IMR-90 (cell line): ENCODE measurements at regions of chr11 and their contacts with region 1.

Region 1: DNA sequence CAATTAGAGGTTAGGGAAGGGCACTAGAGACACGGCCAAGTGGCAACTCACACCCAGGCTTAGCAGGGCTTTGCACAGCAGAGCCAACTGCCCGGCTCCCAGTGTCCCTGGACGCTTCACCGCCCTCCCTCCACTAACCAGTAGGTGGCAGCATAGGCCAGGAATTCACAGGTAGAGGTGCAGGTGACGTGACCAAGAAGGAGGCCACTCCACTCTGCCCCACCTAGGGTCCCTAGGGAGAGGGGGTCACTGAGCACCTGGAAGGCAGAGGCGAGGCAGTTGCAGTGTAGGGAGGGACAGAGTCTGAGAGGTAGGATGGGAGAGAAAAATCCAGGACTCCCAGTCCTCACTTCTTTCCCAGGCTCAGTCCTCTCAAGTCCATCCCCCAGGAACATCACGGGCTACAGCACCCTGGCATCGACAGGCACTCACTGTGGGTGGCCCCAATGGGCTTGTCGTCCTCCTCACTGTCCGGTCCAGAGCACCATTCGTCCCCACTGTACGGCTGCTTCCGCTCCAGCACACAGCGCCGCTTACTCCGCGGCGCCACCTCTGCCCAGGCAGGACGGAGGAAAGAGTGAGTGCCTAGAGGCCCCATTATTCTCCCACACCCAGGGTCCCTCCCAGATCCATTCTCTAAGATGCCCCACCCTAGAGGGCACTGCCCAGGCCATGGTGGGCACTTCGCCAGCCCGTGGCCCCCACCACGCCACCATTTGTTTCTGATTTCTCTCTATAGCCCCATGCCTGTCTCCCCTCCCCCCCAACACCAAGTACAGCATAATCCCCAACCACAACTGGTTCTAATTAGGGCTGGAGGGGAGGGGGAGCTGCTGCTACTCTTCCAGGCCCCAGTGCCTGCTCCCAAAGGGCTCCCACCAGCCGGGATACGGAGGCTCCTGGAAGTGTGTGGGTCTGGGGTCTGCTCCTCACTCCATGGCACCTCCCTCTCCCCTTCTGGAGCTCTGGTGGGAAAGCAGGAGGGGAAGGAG is 18.4 kb downstream of the BCL9L start:
- DNase-seq: peak; percentile 62
- ATAC-seq: peak; percentile 5; the same call in 1 of the 2 replicates
- H3K4me3 ChIP-seq: no peak overlapping the region
- H3K27ac ChIP-seq: peak overlapping the region; percentile 10; the same call in 1 of the 2 replicates
- H3K4me1 ChIP-seq: peaks cover 31% of the 10 kb centered on the region
- H3K27me3 ChIP-seq: no peaks in the 10 kb centered on the region
- CTCF ChIP-seq: peak; percentile 86
- POLR2A ChIP-seq: no peak
- RAD21 ChIP-seq: peak; percentile 97

Region 2: GRCh38 chr11:118705111-118705741 is 202.1 kb before region 1 on chr11:
- CTCF ChIA-PET with region 1: no interaction called
- POLR2A ChIA-PET with region 1: no interaction called
- dilution Hi-C with region 1: no loop called
- in situ Hi-C with region 1: no loop called
- intact Hi-C with region 1: no loop called
- DNase-seq: no peak
- ATAC-seq: no peak
- H3K4me3 ChIP-seq: no peak overlapping the region
- H3K27ac ChIP-seq: no peak overlapping the region
- H3K4me1 ChIP-seq: no peaks in the 10 kb centered on the region
- H3K27me3 ChIP-seq: peaks cover 29% of the 10 kb centered on the region
- CTCF ChIP-seq: no peak
- POLR2A ChIP-seq: no peak
- RAD21 ChIP-seq: no peak

Region 3: DNA sequence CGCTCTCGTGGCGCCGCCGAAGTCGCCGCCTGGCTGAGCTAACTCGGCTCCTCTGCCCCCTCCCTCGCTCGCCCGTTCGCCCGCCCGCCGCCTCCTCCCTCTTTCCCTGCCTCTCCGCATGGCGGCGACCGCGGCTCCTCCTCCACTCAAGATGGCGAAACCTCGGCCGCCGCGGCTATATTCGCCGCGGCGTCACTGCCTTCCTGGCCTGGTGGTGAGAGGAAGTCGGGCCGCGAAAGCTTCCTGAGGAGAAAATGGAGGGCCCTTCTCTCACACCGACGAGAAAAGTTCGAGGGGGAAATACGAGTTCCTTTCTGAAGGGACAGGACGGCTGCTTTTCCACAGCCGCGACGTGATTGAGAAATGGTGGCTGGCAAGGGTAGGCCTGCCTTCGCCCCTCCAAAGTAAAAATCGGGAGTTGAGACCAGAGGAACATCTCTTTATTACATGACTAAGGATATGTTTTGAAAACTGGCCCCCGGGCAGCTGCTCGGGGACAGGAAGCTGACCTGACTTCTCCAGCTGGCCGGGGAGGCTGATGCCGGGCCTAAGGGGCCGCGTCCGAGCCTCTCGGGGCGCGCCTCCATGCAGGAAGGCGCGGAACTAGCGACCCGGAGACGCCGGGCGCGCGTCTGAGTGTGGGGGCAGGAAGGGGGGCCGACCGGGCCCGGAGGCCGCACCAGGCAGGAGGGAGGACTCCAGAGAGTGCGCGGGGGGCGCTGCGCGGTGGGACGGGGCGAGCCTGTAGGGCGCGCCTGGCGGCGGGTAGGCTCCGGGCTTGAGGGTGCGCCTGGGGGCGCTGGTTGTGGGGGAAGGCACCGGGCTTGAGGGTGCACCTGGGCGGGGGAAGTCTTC is 116.0 kb before region 1 on chr11 and contains the start of gene DDX6:
- CTCF ChIA-PET with region 1: interaction called, 4 read pairs
- POLR2A ChIA-PET with region 1: interaction called, 3 read pairs
- dilution Hi-C with region 1: no loop called
- in situ Hi-C with region 1: no loop called
- intact Hi-C with region 1: loop called (anchors 5 kb)
- DNase-seq: peak; percentile 86
- ATAC-seq: peak; percentile 75
- H3K4me3 ChIP-seq: peak within 1 kb of the TSS; percentile 97
- H3K27ac ChIP-seq: peak within 1 kb of the TSS; percentile 98
- H3K4me1 ChIP-seq: no peaks in the 10 kb centered on the region
- H3K27me3 ChIP-seq: no peaks in the 10 kb centered on the region
- CTCF ChIP-seq: peak; percentile 50
- POLR2A ChIP-seq: peak; percentile 94
- RAD21 ChIP-seq: peak; percentile 9; the same call in 1 of the 2 replicates
- total RNA-seq, gene DDX6: 197 and 225 TPM in 2 replicates

Region 4: DNA sequence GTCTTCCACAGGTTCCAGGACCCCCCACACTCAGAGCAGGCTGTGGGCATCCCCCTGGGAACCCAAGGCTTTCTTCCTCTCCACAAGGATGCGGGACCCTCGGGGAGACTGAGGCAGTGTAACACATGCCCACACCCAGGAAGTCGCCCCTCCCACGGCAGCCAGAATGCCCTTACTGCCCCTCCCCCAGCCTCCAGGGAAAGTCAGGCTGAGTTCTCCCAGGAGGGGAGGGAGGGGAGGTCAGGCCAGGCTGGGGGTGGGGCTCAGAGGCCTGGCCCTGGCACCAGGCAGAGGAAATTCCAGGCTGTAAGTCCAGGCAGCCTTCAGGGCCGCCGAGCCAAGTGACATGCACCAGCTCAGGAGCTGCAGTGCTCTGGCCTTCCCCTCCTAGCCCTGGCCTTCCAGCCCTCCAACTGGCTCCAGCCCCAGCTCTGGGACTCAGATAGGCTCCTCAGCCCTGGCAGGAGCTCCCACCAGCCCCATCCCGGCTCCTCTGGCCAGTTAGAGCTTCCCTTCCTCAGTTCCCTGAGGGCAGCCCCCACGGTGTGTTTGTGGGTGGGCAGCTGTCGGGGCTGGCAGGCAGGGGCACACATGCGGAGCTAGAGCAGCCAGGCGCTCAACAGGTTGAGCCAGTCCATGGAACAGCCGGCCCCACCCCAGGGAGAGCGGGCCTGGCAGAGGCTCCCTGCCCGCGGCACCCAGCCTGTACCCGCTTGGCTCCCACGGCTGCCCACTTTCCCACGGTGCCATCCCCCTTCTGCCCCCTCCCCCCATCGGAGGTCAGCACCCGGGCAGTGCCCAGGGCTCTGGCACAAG is 14.8 kb after region 1 on chr11:
- CTCF ChIA-PET with region 1: interaction called, 5 read pairs
- POLR2A ChIA-PET with region 1: interaction called, 18 read pairs
- dilution Hi-C with region 1: no loop called
- in situ Hi-C with region 1: no loop called
- intact Hi-C with region 1: loop called (anchors 1 kb)
- DNase-seq: peak; percentile 56
- ATAC-seq: peak; percentile 3
- H3K4me3 ChIP-seq: peak overlapping the region; percentile 99
- H3K27ac ChIP-seq: peak overlapping the region; percentile 99
- H3K4me1 ChIP-seq: peaks cover 32% of the 10 kb centered on the region
- H3K27me3 ChIP-seq: no peaks in the 10 kb centered on the region
- CTCF ChIP-seq: no peak
- POLR2A ChIP-seq: no peak
- RAD21 ChIP-seq: no peak

Region 5: DNA sequence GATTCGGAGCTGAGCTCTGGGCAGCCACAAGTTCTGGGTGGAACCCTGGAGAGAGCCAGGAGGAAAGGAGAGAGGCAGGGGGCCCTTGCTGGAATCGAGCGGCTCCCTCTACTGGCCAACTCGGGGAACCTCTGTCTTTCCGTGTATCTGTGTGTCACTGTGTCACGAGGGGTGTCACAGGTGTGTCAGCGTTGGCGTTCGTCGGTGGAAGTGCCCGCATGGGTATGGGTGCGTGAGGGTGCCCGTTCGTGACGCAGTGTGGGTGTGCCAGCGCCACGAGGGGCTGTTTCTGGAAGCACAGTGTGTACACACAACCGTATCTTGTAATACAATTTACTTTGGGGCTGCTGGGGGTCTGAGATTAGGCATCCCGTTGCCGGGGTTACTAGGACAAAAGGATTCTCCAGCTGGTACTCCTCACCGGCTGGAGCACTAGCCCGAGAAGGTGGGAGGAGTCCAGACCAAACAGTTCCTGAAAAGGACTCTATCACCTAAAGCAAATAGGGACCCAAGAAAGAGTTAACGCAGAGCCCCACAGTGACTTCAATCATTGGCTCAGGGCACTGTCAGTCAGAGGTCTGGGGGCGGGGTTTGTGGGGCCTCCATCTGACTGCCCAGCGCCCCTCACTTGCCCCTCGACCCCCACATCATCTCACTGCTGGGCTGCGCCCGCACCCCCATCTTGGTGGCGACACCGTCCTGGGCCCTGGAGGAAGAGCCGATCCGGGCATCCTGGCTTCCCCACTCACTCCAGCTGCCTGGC is 20.9 kb after region 1 on chr11:
- CTCF ChIA-PET with region 1: interaction called, 15 read pairs
- POLR2A ChIA-PET with region 1: interaction called, 18 read pairs
- dilution Hi-C with region 1: no loop called
- in situ Hi-C with region 1: no loop called
- intact Hi-C with region 1: loop called (anchors 1 kb)
- DNase-seq: peak; percentile 92
- ATAC-seq: peak; percentile 68
- H3K4me3 ChIP-seq: peak overlapping the region; percentile 69
- H3K27ac ChIP-seq: peak overlapping the region; percentile 88
- H3K4me1 ChIP-seq: peaks cover 3% of the 10 kb centered on the region; the same call in 1 of the 2 replicates
- H3K27me3 ChIP-seq: no peaks in the 10 kb centered on the region
- CTCF ChIP-seq: peak; percentile 88
- POLR2A ChIP-seq: no peak
- RAD21 ChIP-seq: peak; percentile 81

Region 6: DNA sequence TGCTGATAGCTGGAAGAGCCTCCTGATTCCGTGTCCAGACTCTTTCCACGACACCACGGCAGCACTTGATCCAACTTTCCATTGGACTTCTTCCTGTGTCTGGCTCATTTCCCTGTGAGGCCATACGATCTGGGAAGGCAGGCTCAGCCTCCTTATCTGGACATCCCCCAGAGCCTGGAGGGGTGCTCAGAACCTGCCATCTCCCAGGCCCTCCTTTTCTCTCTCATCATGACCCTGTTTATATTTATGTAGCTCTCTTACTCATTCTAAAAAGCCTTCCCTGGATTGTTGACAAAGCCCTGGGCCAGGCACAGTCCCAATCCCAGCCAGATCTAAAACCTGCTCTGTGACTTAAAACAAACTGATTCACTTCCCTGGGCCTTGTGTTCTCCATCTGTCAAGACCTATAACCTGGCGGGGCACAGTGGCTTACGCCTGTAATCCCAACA is 26.2 kb after region 1 on chr11:
- CTCF ChIA-PET with region 1: interaction called, 15 read pairs
- POLR2A ChIA-PET with region 1: interaction called, 13 read pairs
- dilution Hi-C with region 1: no loop called
- in situ Hi-C with region 1: loop called (anchors 5 kb)
- intact Hi-C with region 1: loop called (anchors 1 kb)
- DNase-seq: peak; percentile 16
- ATAC-seq: no peak
- H3K4me3 ChIP-seq: no peak overlapping the region
- H3K27ac ChIP-seq: no peak overlapping the region
- H3K4me1 ChIP-seq: peaks cover 5% of the 10 kb centered on the region; the same call in 1 of the 2 replicates
- H3K27me3 ChIP-seq: no peaks in the 10 kb centered on the region
- CTCF ChIP-seq: no peak
- POLR2A ChIP-seq: no peak
- RAD21 ChIP-seq: no peak

Region 7: GRCh38 chr11:118956094-118956846 is 48.9 kb after region 1 on chr11 and contains the start of gene UPK2:
- CTCF ChIA-PET with region 1: no interaction called
- POLR2A ChIA-PET with region 1: no interaction called
- dilution Hi-C with region 1: no loop called
- in situ Hi-C with region 1: no loop called
- intact Hi-C with region 1: loop called (anchors 1 kb)
- DNase-seq: peak; percentile 71
- ATAC-seq: peak; percentile 100
- H3K4me3 ChIP-seq: no peak within 1 kb of the TSS
- H3K27ac ChIP-seq: no peak within 1 kb of the TSS
- H3K4me1 ChIP-seq: no peaks in the 10 kb centered on the region
- H3K27me3 ChIP-seq: peaks cover 51% of the 10 kb centered on the region
- CTCF ChIP-seq: peak; percentile 97
- POLR2A ChIP-seq: peak; percentile 57; the same call in 1 of the 2 replicates
- RAD21 ChIP-seq: peak; percentile 98
- total RNA-seq, gene UPK2: not detected in 2 replicates